ENCODE measurements at regions of chr1 and their contacts with region 1.

Region 1: GRCh38 chr1:230350208-230350921 is 75.8 kb downstream of the PGBD5 start:
- DNase-seq: peak; percentile 76 to 84
- ATAC-seq: peak; percentile 95 to 97
- H3K4me3 ChIP-seq: no peak overlapping the region
- H3K27ac ChIP-seq: peak overlapping the region; percentile 5 to 74 (median 46)
- H3K4me1 ChIP-seq: peaks cover 10 to 17% of the 10 kb centered on the region in 2 donors
- H3K27me3 ChIP-seq: no peaks in the 10 kb centered on the region
- CTCF ChIP-seq: peak in 2 of 5 experiments; percentile 16 to 18
- POLR2A ChIP-seq: no peak

Region 2: GRCh38 chr1:230401763-230402294 is 51.5 kb after region 1 on chr1:
- in situ Hi-C with region 1: no loop called
- intact Hi-C with region 1: no loop called
- DNase-seq: no peak
- ATAC-seq: no peak
- H3K4me3 ChIP-seq: no peak overlapping the region
- H3K27ac ChIP-seq: no peak overlapping the region
- H3K4me1 ChIP-seq: no peaks in the 10 kb centered on the region
- H3K27me3 ChIP-seq: no peaks in the 10 kb centered on the region
- CTCF ChIP-seq: no peak
- POLR2A ChIP-seq: no peak

Region 3: GRCh38 chr1:230426246-230427093 is 76.1 kb after region 1 on chr1 and contains the start of gene PGBD5:
- in situ Hi-C with region 1: no loop called
- intact Hi-C with region 1: loop called (anchors 1 kb)
- DNase-seq: peak; percentile 29 to 66
- ATAC-seq: peak; percentile 89 to 90
- H3K4me3 ChIP-seq: peak within 1 kb of the TSS; percentile 50 to 63 (median 56)
- H3K27ac ChIP-seq: no peak within 1 kb of the TSS
- H3K4me1 ChIP-seq: peaks cover 0 to 5% of the 10 kb centered on the region in 2 donors
- H3K27me3 ChIP-seq: peaks cover 0 to 25% (median 4%) of the 10 kb centered on the region in 3 donors
- CTCF ChIP-seq: peak in 1 of 5 experiments; percentile 21
- POLR2A ChIP-seq: no peak
- total RNA-seq, gene PGBD5: 1.0 to 4.5 (median 1.9) TPM

Measured in gastrocnemius medialis (tissue), 4 donors.